ENCODE measurements at regions of chr13 and their contacts with region 1.

Region 1: GRCh38 chr13:97855570-97856303 is 97.7 kb upstream of the IPO5 start:
- DNase-seq: peak; percentile 23 to 68 (median 44)
- ATAC-seq: peak; percentile 71 to 86 (median 84)
- H3K4me3 ChIP-seq: no peak overlapping the region
- H3K27ac ChIP-seq: no peak overlapping the region
- H3K4me1 ChIP-seq: peaks cover 0 to 18% (median 3%) of the 10 kb centered on the region in 12 donors
- H3K27me3 ChIP-seq: no peaks in the 10 kb centered on the region
- CTCF ChIP-seq: peak; percentile 72 to 93 (median 86)
- POLR2A ChIP-seq: no peak

Region 2: DNA sequence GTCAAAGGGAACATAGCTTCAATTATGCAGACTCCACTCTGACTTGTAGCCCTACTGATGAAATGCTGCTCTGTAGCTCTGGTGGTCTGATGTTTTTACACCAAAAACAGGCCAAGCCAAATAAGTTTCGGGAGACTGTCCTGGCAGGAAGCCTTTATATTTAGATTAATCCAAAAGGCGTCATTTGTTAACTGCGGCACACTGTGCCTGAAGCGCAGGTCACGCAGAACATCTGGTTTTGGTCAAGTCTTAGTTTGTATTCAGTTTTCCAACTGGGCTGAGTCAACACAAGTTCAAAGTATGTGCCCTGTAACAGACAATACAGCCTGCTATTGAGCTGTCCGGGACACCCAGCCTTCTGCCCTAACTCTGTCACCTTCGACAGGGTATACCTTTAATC is 56.9 kb before region 1 on chr13:
- intact Hi-C with region 1: no loop called
- DNase-seq: no peak
- ATAC-seq: no peak
- H3K4me3 ChIP-seq: no peak overlapping the region
- H3K27ac ChIP-seq: no peak overlapping the region
- H3K4me1 ChIP-seq: no peaks in the 10 kb centered on the region
- H3K27me3 ChIP-seq: no peaks in the 10 kb centered on the region
- CTCF ChIP-seq: no peak
- POLR2A ChIP-seq: no peak

Region 3: DNA sequence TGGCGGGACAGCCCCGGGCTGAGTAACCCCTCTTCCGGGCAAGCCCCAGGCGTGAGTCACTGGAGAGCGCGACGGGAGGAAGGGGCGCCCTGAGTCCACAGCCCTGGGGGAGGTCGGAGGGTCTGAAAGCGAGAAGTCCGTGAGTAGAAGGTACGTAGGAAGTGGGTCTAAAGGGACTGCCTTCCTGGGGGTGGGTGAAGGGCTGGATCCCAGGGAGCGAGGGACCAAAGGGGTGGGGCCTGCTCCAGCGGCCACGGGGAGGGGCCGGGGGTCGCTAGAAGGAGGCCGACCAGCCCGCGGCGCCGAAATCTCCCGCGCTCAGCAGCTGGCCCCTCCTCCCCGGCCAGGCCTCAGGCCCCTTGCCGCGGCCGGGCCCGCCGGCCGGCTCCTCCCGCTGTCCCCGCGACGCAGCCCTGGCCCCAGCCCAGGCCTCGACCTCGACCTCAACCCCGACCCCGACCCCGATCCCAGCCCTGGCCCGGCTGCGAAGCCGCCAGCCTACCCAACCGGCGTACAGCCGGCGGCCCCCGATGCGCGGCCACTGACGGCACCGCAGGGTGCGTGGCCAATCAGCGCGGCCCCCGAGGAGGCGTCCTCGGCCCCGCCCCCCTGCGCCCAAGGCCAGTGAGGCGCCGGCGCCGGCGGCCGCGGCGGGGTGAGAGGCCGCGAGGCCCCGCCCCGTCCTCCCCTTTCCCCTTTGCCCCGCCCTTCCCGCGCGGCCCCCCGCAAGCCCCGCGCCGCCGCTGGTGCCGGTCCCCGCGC is 120.3 kb after region 1 on chr13:
- intact Hi-C with region 1: loop called in 9 of 10 experiments (anchors 2 to 10 kb)
- DNase-seq: peak; percentile 92 to 96 (median 92)
- ATAC-seq: peak; percentile 98 to 99 (median 98)
- H3K4me3 ChIP-seq: peak overlapping the region; percentile 54 to 99 (median 85)
- H3K27ac ChIP-seq: peak overlapping the region; percentile 57 to 98 (median 91)
- H3K4me1 ChIP-seq: peaks cover 0 to 35% (median 16%) of the 10 kb centered on the region in 12 donors
- H3K27me3 ChIP-seq: no peaks in the 10 kb centered on the region
- CTCF ChIP-seq: peak in 1 of 12 donors; percentile 7
- POLR2A ChIP-seq: peak; percentile 55 to 92

Region 4: DNA sequence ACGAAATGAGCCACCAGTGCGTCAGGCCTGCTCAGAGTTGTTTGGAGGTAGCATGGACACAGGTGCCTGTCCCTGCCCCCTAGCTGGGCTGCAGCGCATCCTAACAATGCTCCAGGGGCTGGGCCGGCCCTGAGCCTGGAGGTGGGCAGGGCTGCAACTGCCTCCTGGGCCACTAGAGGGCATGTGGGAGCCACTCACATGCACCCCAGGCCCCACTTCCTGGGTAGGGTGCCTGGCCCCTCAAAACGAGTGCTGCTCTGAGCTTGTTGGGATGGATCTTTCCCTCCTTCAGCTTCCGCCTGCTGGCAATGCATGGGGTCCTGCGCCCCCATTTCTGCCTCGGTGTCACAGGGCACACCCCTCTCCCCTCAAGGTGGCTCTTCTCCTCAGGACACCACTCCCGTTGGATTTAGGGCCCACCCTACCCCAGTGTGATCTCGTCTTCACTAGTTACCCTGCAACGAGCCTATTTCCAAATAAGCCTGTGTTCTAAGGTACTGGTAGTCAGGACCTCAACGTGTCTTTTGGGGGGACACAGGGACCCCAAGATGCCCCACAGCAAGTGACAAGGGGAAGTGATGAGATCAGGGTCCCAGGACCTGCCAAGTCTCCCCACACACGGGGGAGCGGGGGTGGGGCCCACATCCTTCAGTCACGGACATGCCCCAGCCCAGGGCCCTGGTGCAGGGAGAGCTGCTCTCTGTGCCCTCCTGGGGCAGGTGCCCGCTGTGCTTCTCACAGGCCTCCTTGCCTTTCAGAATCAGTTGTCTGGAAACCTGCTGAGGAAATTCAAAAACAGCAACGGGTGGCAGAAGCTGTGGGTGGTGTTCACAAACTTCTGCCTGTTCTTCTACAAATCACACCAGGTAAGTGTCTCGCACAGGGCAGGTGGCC is 589.9 kb after region 1 on chr13:
- intact Hi-C with region 1: loop called in 1 of 10 experiments (anchors 10 kb)
- DNase-seq: peak; percentile 58 to 88 (median 67)
- ATAC-seq: peak; percentile 62 to 88 (median 80)
- H3K4me3 ChIP-seq: no peak overlapping the region
- H3K27ac ChIP-seq: peak overlapping the region in 4 of 12 donors; percentile 5 to 67 (median 16)
- H3K4me1 ChIP-seq: peaks cover 0 to 30% (median 17%) of the 10 kb centered on the region in 12 donors
- H3K27me3 ChIP-seq: no peaks in the 10 kb centered on the region
- CTCF ChIP-seq: peak; percentile 95 to 99 (median 98)
- POLR2A ChIP-seq: no peak

Region 5: DNA sequence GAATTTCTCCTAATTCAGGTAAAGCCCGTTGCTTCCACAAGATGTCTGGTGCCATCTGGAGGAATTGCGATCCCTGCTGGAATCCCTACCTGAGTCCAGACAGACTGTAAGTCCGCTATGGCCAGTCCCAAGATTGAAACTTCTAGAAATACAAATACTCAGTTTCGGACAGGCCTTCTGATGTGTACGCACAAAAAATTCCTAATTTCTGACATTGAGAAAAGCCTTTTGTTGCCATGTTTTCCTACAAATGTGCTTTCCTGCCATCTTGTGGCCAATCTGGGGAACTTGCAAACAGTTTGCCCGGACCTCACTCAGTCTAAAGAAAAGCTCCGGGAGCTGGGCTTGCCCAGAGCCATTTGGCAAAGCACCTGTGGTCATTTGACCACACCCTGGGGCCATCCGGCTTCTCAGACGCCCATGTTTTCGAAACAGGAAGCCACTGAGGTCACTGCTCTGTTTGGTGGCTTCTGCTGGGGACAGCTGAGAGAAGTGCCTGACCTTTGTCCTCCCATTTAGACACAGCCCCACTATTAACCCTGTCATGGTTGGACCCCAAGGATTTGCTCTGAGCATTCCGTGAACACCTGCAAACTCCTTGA is 817.3 kb after region 1 on chr13:
- intact Hi-C with region 1: loop called in 9 of 10 experiments (anchors 5 to 10 kb)
- DNase-seq: peak; percentile 66 to 74 (median 70)
- ATAC-seq: peak; percentile 66 to 96 (median 92)
- H3K4me3 ChIP-seq: peak overlapping the region in 1 of 12 donors; percentile 14
- H3K27ac ChIP-seq: peak overlapping the region in 1 of 12 donors; percentile 1
- H3K4me1 ChIP-seq: peaks cover 0 to 15% (median 7%) of the 10 kb centered on the region in 12 donors
- H3K27me3 ChIP-seq: no peaks in the 10 kb centered on the region
- CTCF ChIP-seq: peak; percentile 82 to 96 (median 88)
- POLR2A ChIP-seq: no peak

Measured in heart left ventricle (tissue), 16 donors.